CD8-positive, alpha-beta T cell (primary cell): ENCODE measurements at regions of chr19 and their contacts with region 1.

Region 1: DNA sequence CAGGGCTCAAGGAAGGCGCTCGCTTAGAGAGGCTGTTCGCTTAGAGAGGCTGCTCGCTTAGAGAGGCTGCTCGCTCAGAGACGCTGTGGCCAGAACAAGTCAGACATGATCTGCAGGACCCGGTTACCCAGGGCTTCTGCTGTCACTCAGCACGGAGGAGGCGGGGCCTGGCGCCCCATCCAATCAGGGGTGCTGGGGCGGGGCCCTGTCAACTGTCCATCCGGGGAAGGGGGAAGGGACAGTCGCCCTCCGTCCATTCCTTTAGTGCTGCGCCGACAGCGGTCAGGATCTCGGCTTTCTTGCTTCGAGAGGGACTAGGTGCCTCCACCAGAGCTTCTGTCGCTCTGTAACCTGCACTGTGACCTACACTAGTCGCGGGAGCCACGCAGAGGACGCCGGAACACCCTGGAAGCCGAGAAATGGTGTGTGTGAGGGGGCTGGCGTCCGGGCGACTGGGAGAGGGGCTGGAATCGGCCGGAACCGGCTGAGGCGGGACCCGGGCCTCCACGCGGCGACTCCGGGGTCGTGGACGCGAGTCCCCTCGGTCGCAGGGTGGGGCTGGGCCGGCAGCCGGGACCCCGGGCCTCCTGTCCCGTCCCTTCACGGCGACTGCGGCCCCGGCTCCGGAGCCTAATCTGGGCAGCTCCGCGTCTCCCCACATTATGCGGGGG is at the start of gene ZNF440:
- DNase-seq: peak; percentile 66 to 88 (median 79)
- ATAC-seq: peak; percentile 99
- H3K4me3 ChIP-seq: peak within 1 kb of the TSS; percentile 89 to 95
- H3K4me3 Mint-ChIP-seq: peak within 1 kb of the TSS; percentile 95
- H3K27ac ChIP-seq: peak within 1 kb of the TSS; percentile 45 to 51
- H3K27ac Mint-ChIP-seq: peak within 1 kb of the TSS; percentile 86
- H3K4me1 ChIP-seq: peaks cover 6% of the 10 kb centered on the region
- H3K4me1 Mint-ChIP-seq: peaks cover 32% of the 10 kb centered on the region
- H3K27me3 ChIP-seq: no peaks in the 10 kb centered on the region
- H3K27me3 Mint-ChIP-seq: no peaks in the 10 kb centered on the region
- CTCF ChIP-seq: no peak
- total RNA-seq, gene ZNF440: 6.4 to 7.9 TPM

Region 2: GRCh38 chr19:11766597-11767591 is 47.3 kb before region 1 on chr19 and contains the start of gene ZNF441:
- CTCF ChIA-PET with region 1: no interaction called
- POLR2A ChIA-PET with region 1: interaction called, 4 read pairs
- intact Hi-C with region 1: loop called in 1 of 2 experiments (anchors 2 kb)
- DNase-seq: peak; percentile 83 to 96 (median 90)
- ATAC-seq: peak; percentile 95
- H3K4me3 ChIP-seq: peak within 1 kb of the TSS; percentile 76 to 78
- H3K4me3 Mint-ChIP-seq: peak within 1 kb of the TSS; percentile 96
- H3K27ac ChIP-seq: peak within 1 kb of the TSS; percentile 79 to 88
- H3K27ac Mint-ChIP-seq: peak within 1 kb of the TSS; percentile 93
- H3K4me1 ChIP-seq: peaks cover 16% of the 10 kb centered on the region
- H3K4me1 Mint-ChIP-seq: peaks cover 26% of the 10 kb centered on the region
- H3K27me3 ChIP-seq: no peaks in the 10 kb centered on the region
- H3K27me3 Mint-ChIP-seq: peaks cover 7% of the 10 kb centered on the region
- CTCF ChIP-seq: no peak
- total RNA-seq, gene ZNF441: 1.9 to 2.3 TPM

Region 3: GRCh38 chr19:11848594-11849469 is 34.7 kb after region 1 on chr19 and contains the start of gene ZNF439:
- CTCF ChIA-PET with region 1: interaction called, 3 read pairs
- POLR2A ChIA-PET with region 1: interaction called, 3 read pairs
- intact Hi-C with region 1: loop called in 1 of 2 experiments (anchors 2 kb)
- DNase-seq: peak; percentile 76 to 93 (median 89)
- ATAC-seq: peak; percentile 100
- H3K4me3 ChIP-seq: peak within 1 kb of the TSS; percentile 67 to 78
- H3K4me3 Mint-ChIP-seq: peak within 1 kb of the TSS; percentile 94
- H3K27ac ChIP-seq: peak within 1 kb of the TSS; percentile 55 to 64
- H3K27ac Mint-ChIP-seq: peak within 1 kb of the TSS; percentile 88
- H3K4me1 ChIP-seq: peaks cover 11% of the 10 kb centered on the region
- H3K4me1 Mint-ChIP-seq: peaks cover 24% of the 10 kb centered on the region
- H3K27me3 ChIP-seq: no peaks in the 10 kb centered on the region
- H3K27me3 Mint-ChIP-seq: no peaks in the 10 kb centered on the region
- CTCF ChIP-seq: no peak
- total RNA-seq, gene ZNF439: 6.2 to 7.9 TPM

Region 4: DNA sequence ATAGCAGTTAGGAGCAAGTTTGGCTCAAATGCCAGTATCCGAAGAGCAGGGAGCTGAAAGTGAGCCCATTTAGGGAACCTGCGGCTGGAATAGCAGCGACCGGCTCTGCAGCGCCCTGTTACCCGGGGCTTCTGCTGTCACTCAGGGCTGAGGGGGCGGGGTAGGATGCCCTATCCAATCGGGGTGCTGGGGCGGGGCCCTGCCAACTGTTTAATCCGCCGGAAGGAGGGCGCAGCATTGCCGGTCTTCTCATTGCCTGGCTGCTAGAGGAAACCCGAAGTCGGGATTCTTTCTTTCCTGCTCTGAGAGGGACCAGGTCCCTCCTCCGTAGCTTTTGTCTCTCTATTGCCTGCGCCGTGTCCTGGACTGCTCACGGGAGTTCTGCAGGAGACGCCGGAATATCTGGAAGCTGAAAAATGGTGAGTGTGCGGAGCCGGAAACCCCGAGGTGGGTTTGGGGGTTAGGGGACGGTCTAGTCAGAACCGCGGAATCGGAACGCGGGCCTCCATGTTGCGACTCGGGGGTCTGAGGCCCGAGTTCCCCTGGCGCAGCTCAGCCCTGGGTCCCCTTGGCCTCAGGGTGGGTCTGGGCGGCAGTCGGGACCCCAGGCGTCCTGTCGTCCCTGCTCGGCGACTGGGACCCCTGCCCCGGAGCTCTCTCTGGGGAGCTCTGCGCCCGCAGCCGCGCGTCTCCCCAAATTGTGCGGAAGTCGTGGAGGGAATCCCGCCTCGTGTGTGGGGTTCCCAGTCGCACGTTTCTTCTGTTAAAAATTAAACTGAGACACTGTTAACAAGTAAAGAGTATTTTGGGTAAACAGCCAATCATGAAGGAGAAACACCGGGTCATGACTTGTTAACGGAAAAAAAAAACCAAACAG is 173.5 kb after region 1 on chr19:
- CTCF ChIA-PET with region 1: interaction called, 4 read pairs
- POLR2A ChIA-PET with region 1: no interaction called
- intact Hi-C with region 1: loop called in 1 of 2 experiments (anchors 5 kb)
- DNase-seq: peak; percentile 82 to 94 (median 91)
- ATAC-seq: peak; percentile 92
- H3K4me3 ChIP-seq: peak overlapping the region; percentile 89 to 98
- H3K4me3 Mint-ChIP-seq: peak overlapping the region; percentile 99
- H3K27ac ChIP-seq: peak overlapping the region; percentile 79 to 83
- H3K27ac Mint-ChIP-seq: peak overlapping the region; percentile 91
- H3K4me1 ChIP-seq: peaks cover 10% of the 10 kb centered on the region
- H3K4me1 Mint-ChIP-seq: peaks cover 26% of the 10 kb centered on the region
- H3K27me3 ChIP-seq: no peaks in the 10 kb centered on the region
- H3K27me3 Mint-ChIP-seq: no peaks in the 10 kb centered on the region
- CTCF ChIP-seq: no peak